ENCODE measurements at regions of chr11 and their contacts with region 1.

Region 1: GRCh38 chr11:12963792-12964536 is 45.2 kb upstream of the RASSF10 start:
- DNase-seq: peak; percentile 84
- CTCF ChIP-seq: peak; percentile 75

Region 2: DNA sequence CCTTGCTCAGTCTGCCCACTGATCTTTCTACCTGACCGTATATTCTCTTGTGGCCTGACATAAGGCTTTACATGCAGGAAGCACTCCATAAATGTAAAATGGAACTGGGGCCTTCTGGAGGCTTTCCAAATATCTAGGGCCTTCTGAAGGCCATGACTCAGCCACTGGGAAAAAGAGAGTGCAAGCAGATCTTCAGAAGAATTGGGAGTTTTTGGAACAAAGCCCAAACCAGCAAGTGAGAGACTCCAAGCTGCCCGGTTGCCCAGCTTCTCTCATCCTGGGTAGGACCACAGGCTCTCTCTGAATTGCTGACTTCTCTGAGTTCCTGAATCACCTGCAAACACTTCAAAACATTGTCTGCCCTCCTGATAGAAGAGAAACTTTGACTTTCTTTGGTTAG is 205.7 kb after region 1 on chr11:
- in situ Hi-C with region 1: loop called (anchors 10 kb)
- DNase-seq: no peak
- CTCF ChIP-seq: no peak

Region 3: DNA sequence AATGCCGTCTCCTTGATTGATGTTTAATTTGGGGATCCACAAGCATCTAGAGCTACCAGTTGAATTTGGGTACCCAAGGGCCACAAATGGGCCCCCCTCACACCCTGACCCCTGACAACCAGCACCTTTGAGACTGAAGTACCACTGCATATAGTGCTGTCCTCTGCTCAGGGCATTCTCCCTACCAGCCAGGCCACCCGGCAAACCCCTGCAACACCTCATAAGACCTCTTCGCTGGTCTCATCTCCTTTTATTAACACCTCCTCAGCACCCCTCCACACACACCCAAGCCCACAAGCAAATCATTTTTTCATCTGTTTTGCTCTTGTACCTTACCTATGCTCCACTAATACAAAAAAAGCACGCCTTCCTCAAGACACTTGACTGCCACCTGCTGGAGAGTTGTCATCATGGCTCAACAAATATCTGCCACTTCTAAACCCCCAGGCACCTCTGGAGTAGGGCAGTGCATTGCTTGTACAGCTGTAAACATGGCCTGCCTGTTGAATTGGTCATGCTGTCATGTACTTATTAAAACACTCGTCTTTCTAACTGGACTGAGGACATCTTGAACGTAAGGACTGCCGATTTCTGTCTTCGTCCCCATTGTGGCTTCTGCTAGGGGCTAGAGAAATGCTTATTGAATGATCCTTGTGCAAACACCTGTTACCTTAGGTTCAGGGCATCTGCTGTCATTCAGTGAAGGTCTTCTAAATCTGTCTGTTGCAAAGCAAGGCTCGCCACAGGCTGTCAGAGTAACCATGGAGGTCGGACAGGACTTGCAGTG is 380.2 kb after region 1 on chr11:
- in situ Hi-C with region 1: loop called (anchors 25 kb)
- DNase-seq: peak; percentile 74
- CTCF ChIP-seq: peak; percentile 74

Measured in GM13976 (cell line).